ENCODE measurements at regions of chr12 and their contacts with region 1.

Region 1: DNA sequence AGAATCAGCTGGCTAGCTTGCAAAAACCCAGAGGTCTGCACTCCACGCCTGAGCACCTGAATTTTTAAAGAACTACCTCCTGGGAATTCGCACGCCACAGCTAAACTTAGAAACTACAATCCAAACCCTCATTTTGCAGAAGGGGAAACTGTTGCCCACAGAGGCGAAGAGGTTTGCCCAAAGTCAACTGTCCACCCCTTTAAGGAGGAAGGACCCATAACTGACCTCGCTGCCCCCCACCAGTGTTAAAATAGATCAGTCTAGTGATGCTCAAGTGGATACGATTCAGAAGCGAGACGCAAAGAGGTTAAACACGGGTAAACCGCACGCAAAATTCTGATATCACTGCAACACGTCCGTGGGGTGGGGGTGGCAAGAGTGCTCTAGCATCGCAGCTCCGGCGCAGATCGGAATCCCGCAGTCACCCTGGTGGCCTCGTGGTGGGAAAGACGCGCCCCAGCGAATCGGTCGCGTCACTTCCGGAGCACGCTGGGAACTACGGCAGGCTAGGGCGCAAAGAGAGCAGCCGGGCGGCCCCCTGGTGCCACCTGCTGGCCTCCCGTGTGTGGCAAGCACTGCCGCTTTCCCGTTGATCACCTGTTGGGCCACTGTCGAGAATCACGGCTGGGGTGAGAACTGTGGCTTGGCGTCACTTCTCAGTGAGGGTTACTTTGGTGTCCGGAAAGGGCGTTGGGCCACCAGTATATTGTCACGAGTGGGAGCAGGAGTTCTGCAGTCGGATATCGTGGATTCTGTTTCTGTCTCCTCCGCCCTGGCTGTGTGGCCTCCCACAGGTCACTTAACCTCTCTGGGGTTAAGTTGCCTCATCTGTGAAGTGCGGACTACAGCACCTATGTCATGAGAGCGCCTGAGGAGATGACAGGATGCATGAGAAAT is at the start of gene ALKBH2:
- DNase-seq: peak; percentile 82 to 89
- H3K4me3 ChIP-seq: peak within 1 kb of the TSS; percentile 72
- H3K27ac ChIP-seq: peak within 1 kb of the TSS; percentile 26; the same call in 1 of the 2 replicates
- H3K4me1 ChIP-seq: peaks cover 18% of the 10 kb centered on the region; the same call in 1 of the 2 replicates
- H3K27me3 ChIP-seq: no peaks in the 10 kb centered on the region
- CTCF ChIP-seq: peak; percentile 90
- total RNA-seq, gene ALKBH2: 14.9 and 15.2 TPM in 2 replicates

Region 2: GRCh38 chr12:108514973-108515814 is 578.1 kb before region 1 on chr12 and contains the start of gene FICD:
- CTCF ChIA-PET with region 1: no interaction called
- POLR2A ChIA-PET with region 1: no interaction called
- intact Hi-C with region 1: loop called (anchors 1 kb)
- DNase-seq: peak; percentile 96 to 99
- H3K4me3 ChIP-seq: peak within 1 kb of the TSS; percentile 80
- H3K27ac ChIP-seq: 0 out of 2 replicates have a peak within 1 kb of the TSS, but pooled peaks have one; percentile 23
- H3K4me1 ChIP-seq: peaks cover 11% of the 10 kb centered on the region; the same call in 1 of the 2 replicates
- H3K27me3 ChIP-seq: no peaks in the 10 kb centered on the region
- CTCF ChIP-seq: no peak
- total RNA-seq, gene FICD: 1.9 and 3.2 TPM in 2 replicates

Region 3: DNA sequence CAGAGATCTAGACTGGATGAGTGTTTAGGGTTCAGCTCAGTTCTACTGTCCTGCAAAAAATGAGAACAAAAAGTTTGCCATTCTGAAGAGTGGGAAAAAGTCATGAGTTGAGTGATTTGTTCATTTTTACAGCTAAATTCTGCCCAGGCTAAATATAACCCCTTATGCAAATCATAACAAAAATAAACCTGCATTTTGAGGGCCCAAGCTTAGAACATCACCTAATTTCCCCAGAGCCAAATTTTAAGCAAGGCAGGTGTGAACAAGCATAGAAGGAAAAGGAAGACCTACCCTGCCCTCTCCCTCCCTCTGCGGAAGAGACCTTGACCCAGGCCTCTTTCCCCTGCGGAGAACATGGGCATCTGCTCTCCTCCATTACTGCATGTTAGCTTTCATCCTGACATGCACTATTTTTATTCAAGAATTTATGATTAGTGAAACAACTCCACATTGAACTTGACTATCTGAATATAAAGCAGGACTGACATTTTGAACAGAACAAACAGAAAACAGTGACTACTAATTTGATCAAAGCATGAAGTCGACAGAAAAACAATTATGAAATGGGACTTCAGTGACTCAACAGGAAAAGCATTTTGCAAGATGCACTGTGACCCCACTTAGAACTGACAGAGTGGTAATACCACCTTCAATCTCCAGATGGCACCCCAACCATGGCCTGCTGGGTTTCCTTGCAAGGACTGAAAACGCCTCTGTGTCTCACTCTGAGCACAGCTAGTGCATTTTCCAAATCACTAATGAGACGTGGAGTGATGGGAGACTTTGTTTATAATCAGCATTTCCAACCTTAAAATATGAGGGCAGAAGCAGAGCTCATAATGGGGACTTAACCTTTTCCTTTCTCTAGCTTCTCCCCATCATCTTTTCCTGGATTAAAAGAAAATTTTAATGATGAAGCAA is 428.7 kb before region 1 on chr12:
- CTCF ChIA-PET with region 1: no interaction called
- POLR2A ChIA-PET with region 1: no interaction called
- intact Hi-C with region 1: loop called (anchors 2 kb)
- DNase-seq: peak; percentile 84 to 88
- H3K4me3 ChIP-seq: no peak overlapping the region
- H3K27ac ChIP-seq: peak overlapping the region; percentile 51
- H3K4me1 ChIP-seq: peaks cover 7% of the 10 kb centered on the region
- H3K27me3 ChIP-seq: no peaks in the 10 kb centered on the region
- CTCF ChIP-seq: peak; percentile 95

Region 4: GRCh38 chr12:108950991-108951739 is 142.1 kb before region 1 on chr12:
- CTCF ChIA-PET with region 1: no interaction called
- POLR2A ChIA-PET with region 1: no interaction called
- intact Hi-C with region 1: loop called (anchors 5 kb)
- DNase-seq: peak; percentile 41 to 73
- H3K4me3 ChIP-seq: no peak overlapping the region
- H3K27ac ChIP-seq: no peak overlapping the region
- H3K4me1 ChIP-seq: no peaks in the 10 kb centered on the region
- H3K27me3 ChIP-seq: peaks cover 30% of the 10 kb centered on the region
- CTCF ChIP-seq: peak; percentile 97